ENCODE measurements at regions of chr9 and their contacts with region 1.

Region 1: DNA sequence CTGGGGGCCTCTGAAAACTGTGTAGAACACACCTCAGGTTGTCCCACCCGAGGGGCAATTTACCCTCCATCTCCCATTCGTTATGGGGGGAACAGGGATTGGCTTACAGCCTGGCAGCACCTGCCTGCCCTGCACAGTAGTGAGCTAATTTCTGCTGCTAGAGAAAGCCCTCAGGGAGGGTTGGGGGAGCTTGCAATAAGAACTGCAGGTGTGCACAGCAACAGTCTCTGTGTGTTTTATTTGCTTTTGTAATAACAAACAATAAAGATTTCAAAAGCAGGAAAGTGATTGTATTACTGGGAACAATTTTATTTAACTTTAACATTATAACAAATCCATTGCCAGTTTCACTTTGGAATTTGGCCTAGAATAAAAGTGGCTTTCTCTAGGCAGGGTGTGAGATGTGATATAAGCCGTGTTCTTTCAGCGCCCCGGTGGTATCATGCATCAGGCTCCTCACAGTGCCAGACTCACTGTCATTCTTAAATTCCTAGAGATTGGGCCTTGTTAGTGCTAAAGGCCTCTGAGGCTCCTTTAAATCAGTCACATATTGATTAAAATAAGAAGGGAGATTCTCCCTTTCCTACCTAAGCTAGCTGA is 81.1 kb downstream of the RMI1 start:
- DNase-seq: peak in 1 of 5 donors; percentile 53
- ATAC-seq: peak; percentile 85 to 93 (median 88)
- H3K4me3 ChIP-seq: no peak overlapping the region
- H3K27ac ChIP-seq: peak overlapping the region in 10 of 12 donors; percentile 26 to 91 (median 58)
- H3K4me1 ChIP-seq: peaks cover 0 to 22% (median 2%) of the 10 kb centered on the region in 12 donors
- H3K27me3 ChIP-seq: no peaks in the 10 kb centered on the region
- CTCF ChIP-seq: no peak
- POLR2A ChIP-seq: no peak

Region 2: DNA sequence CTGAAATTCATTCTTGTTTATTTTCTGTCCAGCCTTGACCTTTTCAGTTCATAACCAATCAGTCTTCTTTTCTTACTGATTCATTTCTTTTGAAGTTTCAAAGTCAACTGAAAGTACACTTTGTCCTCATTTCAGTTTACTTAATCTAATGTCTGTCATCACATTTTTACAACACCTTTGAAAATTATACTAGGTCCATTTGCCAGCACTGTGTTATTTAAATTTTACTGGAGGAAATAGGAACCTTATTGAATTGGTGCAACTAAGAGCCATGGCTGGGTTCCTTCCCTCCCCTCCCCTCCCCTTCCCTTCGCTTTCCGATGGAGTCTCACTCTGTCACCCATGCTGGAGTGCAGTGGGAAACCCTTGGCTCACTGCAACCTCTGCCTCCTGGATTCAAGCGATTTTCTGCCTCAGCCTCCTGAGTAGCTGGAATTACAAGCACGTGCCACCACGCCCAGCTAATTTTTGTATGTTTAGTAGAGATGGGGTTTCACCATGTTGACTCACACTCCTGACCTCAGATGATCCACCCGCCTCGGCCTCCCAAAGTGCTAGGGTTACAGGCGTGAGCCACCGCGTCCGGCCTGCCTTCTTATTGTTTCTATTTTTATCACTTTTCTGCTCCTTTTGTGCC is 74.8 kb before region 1 on chr9:
- intact Hi-C with region 1: loop called in 4 of 10 experiments (anchors 2 to 5 kb)
- DNase-seq: no peak
- ATAC-seq: peak in 3 of 4 donors; percentile 23 to 39 (median 39)
- H3K4me3 ChIP-seq: no peak overlapping the region
- H3K27ac ChIP-seq: no peak overlapping the region
- H3K4me1 ChIP-seq: peaks cover 0 to 31% (median 3%) of the 10 kb centered on the region in 12 donors
- H3K27me3 ChIP-seq: no peaks in the 10 kb centered on the region
- CTCF ChIP-seq: no peak
- POLR2A ChIP-seq: no peak

Region 3: GRCh38 chr9:84748112-84748511 is 686.4 kb after region 1 on chr9:
- intact Hi-C with region 1: no loop called
- DNase-seq: no peak
- ATAC-seq: no peak
- H3K4me3 ChIP-seq: no peak overlapping the region
- H3K27ac ChIP-seq: no peak overlapping the region
- H3K4me1 ChIP-seq: peaks cover 0 to 11% (median 0%) of the 10 kb centered on the region in 12 donors
- H3K27me3 ChIP-seq: peaks cover 0 to 2% (median 0%) of the 10 kb centered on the region in 9 donors
- CTCF ChIP-seq: no peak
- POLR2A ChIP-seq: no peak